Activated CD8-positive, alpha-beta T cell treated with anti-CD3 and anti-CD28 coated beads for 36 hours (primary cell): ENCODE measurements at regions of chr10 and their contacts with region 1.

Region 1: GRCh38 chr10:88932539-88933256 is 19.9 kb downstream of the ACTA2 start:
- DNase-seq: peak; percentile 57
- ATAC-seq: peak; percentile 86
- H3K4me3 Mint-ChIP-seq: no peak overlapping the region
- H3K27ac Mint-ChIP-seq: peak overlapping the region; percentile 38
- H3K4me1 Mint-ChIP-seq: peaks cover 25% of the 10 kb centered on the region
- H3K27me3 Mint-ChIP-seq: no peaks in the 10 kb centered on the region
- CTCF ChIP-seq: peak; percentile 74

Region 2: DNA sequence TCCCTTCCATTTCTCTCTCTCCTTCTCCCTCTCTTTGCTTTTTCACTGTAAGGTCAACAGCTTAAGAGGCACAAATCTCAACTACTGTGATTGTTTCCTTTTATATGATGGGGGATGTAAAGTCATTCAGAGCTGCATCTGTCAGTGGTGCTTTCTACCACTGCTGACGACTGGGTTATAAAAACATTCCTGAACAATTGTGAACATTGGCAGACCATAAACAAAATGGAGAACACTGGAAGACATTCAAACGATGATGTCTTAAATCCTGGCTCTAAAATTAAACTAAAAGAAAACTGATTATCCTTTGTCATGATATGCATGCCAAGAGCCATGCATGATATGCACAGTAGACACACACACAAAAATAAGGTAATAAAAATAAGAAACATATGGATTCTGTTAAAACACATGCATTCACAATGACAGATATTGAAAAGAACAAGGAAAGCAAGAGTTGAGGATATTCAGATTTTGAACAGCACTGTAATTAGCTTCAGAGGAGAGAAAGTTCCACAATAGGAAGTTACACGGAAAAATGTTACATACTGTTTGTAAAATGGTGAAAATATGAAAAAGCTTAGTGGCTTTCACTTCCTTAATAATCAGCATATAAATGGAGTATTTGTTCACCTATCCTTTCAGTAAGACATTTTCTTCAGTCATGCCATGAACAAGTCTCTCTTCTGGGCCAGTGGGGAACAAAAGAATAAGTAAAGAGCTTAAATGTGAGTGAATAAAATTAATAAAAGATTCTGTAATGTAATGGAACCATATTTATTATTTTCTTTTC is 438.8 kb before region 1 on chr10:
- CTCF ChIA-PET with region 1: no interaction called
- POLR2A ChIA-PET with region 1: no interaction called
- intact Hi-C with region 1: no loop called
- DNase-seq: no peak
- ATAC-seq: no peak
- H3K4me3 Mint-ChIP-seq: no peak overlapping the region
- H3K27ac Mint-ChIP-seq: no peak overlapping the region
- H3K4me1 Mint-ChIP-seq: peaks cover 17% of the 10 kb centered on the region
- H3K27me3 Mint-ChIP-seq: no peaks in the 10 kb centered on the region
- CTCF ChIP-seq: no peak

Region 3: GRCh38 chr10:88820748-88821389 is 111.8 kb before region 1 on chr10:
- CTCF ChIA-PET with region 1: interaction called, 12 read pairs
- POLR2A ChIA-PET with region 1: interaction called, 4 read pairs
- intact Hi-C with region 1: no loop called
- DNase-seq: no peak
- ATAC-seq: no peak
- H3K4me3 Mint-ChIP-seq: no peak overlapping the region
- H3K27ac Mint-ChIP-seq: no peak overlapping the region
- H3K4me1 Mint-ChIP-seq: peaks cover 18% of the 10 kb centered on the region
- H3K27me3 Mint-ChIP-seq: no peaks in the 10 kb centered on the region
- CTCF ChIP-seq: no peak

Region 4: GRCh38 chr10:88851706-88852105 is 81.0 kb before region 1 on chr10 and contains the start of gene ANKRD22:
- CTCF ChIA-PET with region 1: interaction called, 21 read pairs
- POLR2A ChIA-PET with region 1: no interaction called
- intact Hi-C with region 1: no loop called
- DNase-seq: no peak
- ATAC-seq: no peak
- H3K4me3 Mint-ChIP-seq: no peak within 1 kb of the TSS
- H3K27ac Mint-ChIP-seq: no peak within 1 kb of the TSS
- H3K4me1 Mint-ChIP-seq: peaks cover 15% of the 10 kb centered on the region
- H3K27me3 Mint-ChIP-seq: peaks cover 4% of the 10 kb centered on the region
- CTCF ChIP-seq: no peak
- total RNA-seq, gene ANKRD22: not detected

Region 5: DNA sequence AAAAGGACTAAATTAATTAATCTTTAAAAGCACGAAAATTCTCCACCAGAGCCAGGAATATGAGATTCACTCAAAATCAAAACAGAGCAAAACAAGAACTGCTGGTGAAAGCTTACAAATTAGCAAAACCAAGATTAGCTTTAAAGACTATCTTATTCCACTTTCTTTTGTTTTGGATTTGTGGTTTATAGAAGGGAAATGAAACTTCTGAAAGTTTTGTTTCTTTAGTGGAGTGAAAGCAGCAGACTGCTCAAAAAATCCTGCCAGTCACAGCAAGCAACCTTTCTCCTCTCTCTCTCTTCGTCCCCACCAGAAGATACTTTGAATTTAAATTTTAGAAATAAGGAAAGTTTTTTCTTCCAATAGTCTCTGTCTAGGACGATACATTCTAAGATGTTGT is 12.1 kb after region 1 on chr10:
- CTCF ChIA-PET with region 1: interaction called, 52 read pairs
- POLR2A ChIA-PET with region 1: no interaction called
- intact Hi-C with region 1: no loop called
- DNase-seq: no peak
- ATAC-seq: no peak
- H3K4me3 Mint-ChIP-seq: no peak overlapping the region
- H3K27ac Mint-ChIP-seq: no peak overlapping the region
- H3K4me1 Mint-ChIP-seq: peaks cover 15% of the 10 kb centered on the region
- H3K27me3 Mint-ChIP-seq: no peaks in the 10 kb centered on the region
- CTCF ChIP-seq: no peak

Region 6: DNA sequence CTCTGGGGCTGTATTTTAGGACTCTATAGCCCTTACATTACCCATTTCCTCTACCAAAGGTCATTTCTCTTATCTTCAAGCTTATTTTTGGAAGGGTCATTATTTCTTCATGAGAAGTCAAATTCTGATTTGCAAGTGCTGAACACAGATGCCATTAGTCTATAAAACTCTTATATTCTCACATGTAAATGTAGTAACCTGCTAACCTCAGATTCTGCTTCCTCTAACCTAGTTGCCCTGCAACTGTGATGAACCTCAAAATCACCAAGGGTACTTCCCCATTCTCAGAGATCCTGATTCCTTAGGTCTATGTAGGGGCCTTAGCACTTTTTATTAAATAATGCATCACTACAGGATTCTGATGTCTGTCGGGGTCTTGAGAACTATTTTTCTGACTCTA is 64.2 kb after region 1 on chr10:
- CTCF ChIA-PET with region 1: interaction called, 35 read pairs
- POLR2A ChIA-PET with region 1: interaction called, 4 read pairs
- intact Hi-C with region 1: loop called (anchors 5 kb)
- DNase-seq: no peak
- ATAC-seq: peak; percentile 26
- H3K4me3 Mint-ChIP-seq: peak overlapping the region; percentile 9
- H3K27ac Mint-ChIP-seq: peak overlapping the region; percentile 16
- H3K4me1 Mint-ChIP-seq: peaks cover 73% of the 10 kb centered on the region
- H3K27me3 Mint-ChIP-seq: no peaks in the 10 kb centered on the region
- CTCF ChIP-seq: no peak

Region 7: DNA sequence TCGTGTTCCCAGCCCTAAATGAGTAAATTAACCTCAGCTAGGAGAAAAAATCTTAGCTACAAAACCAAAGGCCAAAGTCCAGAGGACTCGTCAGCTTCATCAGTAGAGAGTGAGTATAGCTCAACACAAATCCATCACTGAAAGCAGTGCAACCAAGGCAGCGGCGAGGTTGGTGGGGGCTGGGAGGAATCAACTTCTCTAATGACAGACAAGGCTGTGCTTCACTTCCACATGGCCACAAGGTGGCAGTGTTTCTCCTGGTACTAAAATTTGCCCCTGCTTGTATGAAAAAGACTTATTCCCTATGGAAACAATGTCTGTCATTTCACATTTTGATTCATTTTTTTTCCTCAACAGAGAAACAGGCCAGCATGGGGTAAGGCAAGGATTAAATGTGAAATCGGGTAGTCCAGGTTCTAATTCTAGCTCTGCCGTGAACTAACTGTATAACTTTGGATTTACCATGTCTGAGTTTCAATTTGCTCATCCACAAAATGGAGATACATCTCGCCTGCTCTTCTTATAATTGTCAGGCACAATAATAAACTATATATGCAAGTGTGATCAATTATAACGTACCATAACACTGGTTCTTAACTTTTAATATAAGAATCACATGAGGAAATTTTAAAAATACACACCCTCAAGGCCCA is 97.2 kb after region 1 on chr10:
- CTCF ChIA-PET with region 1: interaction called, 33 read pairs
- POLR2A ChIA-PET with region 1: no interaction called
- intact Hi-C with region 1: loop called (anchors 5 kb)
- DNase-seq: peak; percentile 84
- ATAC-seq: peak; percentile 55
- H3K4me3 Mint-ChIP-seq: no peak overlapping the region
- H3K27ac Mint-ChIP-seq: no peak overlapping the region
- H3K4me1 Mint-ChIP-seq: peaks cover 40% of the 10 kb centered on the region
- H3K27me3 Mint-ChIP-seq: no peaks in the 10 kb centered on the region
- CTCF ChIP-seq: peak; percentile 94